Activated T-helper 2 cell treated with anti-CD3 and anti-CD28 coated beads, Interferon-gamma antibody, Interleukin-2, Interleukin-4, amounts not matched to agents 10 μg/mL and 5 μg/mL and 100 μg/mL, durations not matched to agents 14 hours and 24 hours and 36 hours (primary cell): ENCODE measurements at regions of chr5 and their contacts with region 1.

Region 1: DNA sequence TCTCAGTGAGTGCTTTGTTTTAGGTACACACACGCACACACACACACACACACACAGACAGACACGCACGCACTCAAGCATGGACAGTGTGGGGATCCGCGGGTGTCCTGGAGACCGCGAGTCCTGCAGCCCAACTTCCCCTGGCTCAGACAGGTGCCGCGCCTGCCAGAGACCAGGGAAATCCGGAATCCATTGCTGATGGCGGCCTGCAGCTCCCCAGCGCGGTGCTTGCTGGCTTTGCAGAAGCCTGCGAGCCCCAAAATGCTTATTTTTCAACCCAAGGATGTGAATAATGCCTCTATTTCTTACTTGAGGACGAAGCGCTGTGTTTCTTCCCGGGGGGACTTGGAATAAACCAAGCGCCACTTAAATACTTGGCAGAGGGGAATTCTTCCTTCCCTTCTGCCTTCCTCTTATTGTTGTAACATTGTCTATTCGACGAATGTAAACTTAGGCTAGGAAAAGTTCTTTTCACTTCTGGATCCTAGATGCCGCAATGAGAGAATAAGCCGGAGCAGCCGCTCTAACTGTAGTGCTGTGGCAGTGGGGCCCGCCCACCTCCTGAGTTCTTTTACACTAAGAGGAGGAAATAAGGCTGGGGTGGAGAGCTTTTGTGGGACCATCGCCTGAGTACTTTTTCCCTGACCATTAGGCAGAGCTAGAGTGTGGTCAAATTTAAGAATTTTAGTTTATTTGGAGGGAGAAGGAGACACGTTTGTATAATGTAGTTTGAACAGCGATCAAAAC is 802 bp downstream of the ITGA2 start:
- DNase-seq: peak; percentile 26
- H3K4me3 Mint-ChIP-seq: peak overlapping the region; percentile 75
- H3K27ac Mint-ChIP-seq: no peak overlapping the region
- H3K4me1 Mint-ChIP-seq: peaks cover 29% of the 10 kb centered on the region
- H3K27me3 Mint-ChIP-seq: peaks cover 40% of the 10 kb centered on the region

Region 2: GRCh38 chr5:53031695-53032096 is 41.7 kb after region 1 on chr5:
- intact Hi-C with region 1: loop called (anchors 1 kb)
- DNase-seq: peak; percentile 50
- H3K4me3 Mint-ChIP-seq: no peak overlapping the region
- H3K27ac Mint-ChIP-seq: peak overlapping the region; percentile 56
- H3K4me1 Mint-ChIP-seq: peaks cover 57% of the 10 kb centered on the region
- H3K27me3 Mint-ChIP-seq: peaks cover 6% of the 10 kb centered on the region

Region 3: GRCh38 chr5:53041071-53041692 is 51.2 kb after region 1 on chr5:
- intact Hi-C with region 1: loop called (anchors 2 kb)
- DNase-seq: peak; percentile 36
- H3K4me3 Mint-ChIP-seq: peak overlapping the region; percentile 15
- H3K27ac Mint-ChIP-seq: peak overlapping the region; percentile 24
- H3K4me1 Mint-ChIP-seq: peaks cover 73% of the 10 kb centered on the region
- H3K27me3 Mint-ChIP-seq: no peaks in the 10 kb centered on the region